ENCODE measurements at regions of chr4 and their contacts with region 1.

Region 1: GRCh38 chr4:174282836-174283506 is 496 bp downstream of the FBXO8 start:
- DNase-seq: peak; percentile 47 to 87 (median 83)
- ATAC-seq: peak; percentile 97
- H3K4me3 ChIP-seq: peak overlapping the region; percentile 99
- H3K4me3 Mint-ChIP-seq: peak overlapping the region; percentile 91 to 100 (median 99)
- H3K27ac ChIP-seq: peak overlapping the region; percentile 98
- H3K27ac Mint-ChIP-seq: peak overlapping the region; percentile 99 to 100 (median 100)
- H3K4me1 ChIP-seq: peaks cover 25 to 29% of the 10 kb centered on the region in 2 donors
- H3K4me1 Mint-ChIP-seq: peaks cover 38 to 91% (median 81%) of the 10 kb centered on the region in 7 donors
- H3K27me3 ChIP-seq: no peaks in the 10 kb centered on the region
- H3K27me3 Mint-ChIP-seq: no peaks in the 10 kb centered on the region

Region 2: GRCh38 chr4:173168396-173169177 is 1114.4 kb before region 1 on chr4 and contains the start of gene GALNT7:
- CTCF ChIA-PET with region 1: no interaction called
- POLR2A ChIA-PET with region 1: no interaction called
- intact Hi-C with region 1: loop called (anchors 1 to 2 kb)
- DNase-seq: peak; percentile 27 to 71 (median 46)
- ATAC-seq: peak; percentile 68
- H3K4me3 ChIP-seq: peak within 1 kb of the TSS; percentile 76
- H3K4me3 Mint-ChIP-seq: peak within 1 kb of the TSS; percentile 93 to 98 (median 96)
- H3K27ac ChIP-seq: peak within 1 kb of the TSS; percentile 73
- H3K27ac Mint-ChIP-seq: peak within 1 kb of the TSS; percentile 80 to 96 (median 91)
- H3K4me1 ChIP-seq: peaks cover 15 to 23% of the 10 kb centered on the region in 2 donors
- H3K4me1 Mint-ChIP-seq: peaks cover 30 to 61% (median 48%) of the 10 kb centered on the region in 7 donors
- H3K27me3 ChIP-seq: no peaks in the 10 kb centered on the region
- H3K27me3 Mint-ChIP-seq: no peaks in the 10 kb centered on the region
- total RNA-seq, gene GALNT7: 10.2 to 24.1 (median 21.2) TPM

Region 3: GRCh38 chr4:173370477-173371291 is 912.3 kb before region 1 on chr4 and contains the start of gene SAP30:
- CTCF ChIA-PET with region 1: no interaction called
- POLR2A ChIA-PET with region 1: interaction called, 3 read pairs
- intact Hi-C with region 1: loop called (anchors 1 kb)
- DNase-seq: peak; percentile 88 to 97 (median 91)
- ATAC-seq: peak; percentile 91
- H3K4me3 ChIP-seq: peak within 1 kb of the TSS; percentile 99
- H3K4me3 Mint-ChIP-seq: peak within 1 kb of the TSS; percentile 89 to 100 (median 98)
- H3K27ac ChIP-seq: peak within 1 kb of the TSS; percentile 82
- H3K27ac Mint-ChIP-seq: peak within 1 kb of the TSS; percentile 88 to 99 (median 97)
- H3K4me1 ChIP-seq: peaks cover 5 to 20% of the 10 kb centered on the region in 2 donors
- H3K4me1 Mint-ChIP-seq: peaks cover 14 to 46% (median 18%) of the 10 kb centered on the region in 7 donors
- H3K27me3 ChIP-seq: peaks cover 0 to 10% of the 10 kb centered on the region in 2 donors
- H3K27me3 Mint-ChIP-seq: peaks cover 2 to 29% (median 17%) of the 10 kb centered on the region in 5 donors
- total RNA-seq, gene SAP30: 0.48 to 27.4 (median 1.1) TPM

Region 4: GRCh38 chr4:174303687-174304086 is 20.7 kb after region 1 on chr4:
- CTCF ChIA-PET with region 1: no interaction called
- POLR2A ChIA-PET with region 1: interaction called, 4 read pairs
- intact Hi-C with region 1: loop called in 1 of 2 experiments (anchors 2 kb)
- DNase-seq: no peak
- ATAC-seq: no peak
- H3K4me3 ChIP-seq: no peak overlapping the region
- H3K4me3 Mint-ChIP-seq: no peak overlapping the region
- H3K27ac ChIP-seq: no peak overlapping the region
- H3K27ac Mint-ChIP-seq: no peak overlapping the region
- H3K4me1 ChIP-seq: no peaks in the 10 kb centered on the region
- H3K4me1 Mint-ChIP-seq: peaks cover 0 to 15% (median 8%) of the 10 kb centered on the region in 7 donors
- H3K27me3 ChIP-seq: no peaks in the 10 kb centered on the region
- H3K27me3 Mint-ChIP-seq: no peaks in the 10 kb centered on the region

Region 5: DNA sequence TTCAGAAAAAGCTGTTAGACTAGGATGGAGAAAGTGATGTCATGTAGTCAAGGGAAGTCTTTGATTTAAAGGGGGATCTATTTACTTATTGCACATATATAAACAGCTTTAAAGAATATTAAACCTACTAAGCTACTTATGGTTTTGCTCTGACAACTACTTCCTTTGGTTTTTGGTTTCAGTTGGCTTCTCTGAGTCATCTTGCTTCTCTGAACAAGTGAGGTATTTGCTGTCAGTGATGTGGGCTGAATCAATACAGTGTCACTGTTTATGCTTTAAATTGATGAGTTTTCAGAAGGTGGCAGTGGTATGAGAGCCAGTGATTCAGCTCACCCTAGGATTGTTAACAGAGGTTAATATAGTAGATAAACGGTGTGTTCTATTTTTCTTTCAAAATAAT is 75.9 kb after region 1 on chr4:
- CTCF ChIA-PET with region 1: no interaction called
- POLR2A ChIA-PET with region 1: no interaction called
- intact Hi-C with region 1: loop called in 1 of 2 experiments (anchors 2 kb)
- DNase-seq: no peak
- ATAC-seq: peak; percentile 26
- H3K4me3 ChIP-seq: no peak overlapping the region
- H3K4me3 Mint-ChIP-seq: no peak overlapping the region
- H3K27ac ChIP-seq: no peak overlapping the region
- H3K27ac Mint-ChIP-seq: no peak overlapping the region
- H3K4me1 ChIP-seq: no peaks in the 10 kb centered on the region
- H3K4me1 Mint-ChIP-seq: peaks cover 0 to 23% (median 0%) of the 10 kb centered on the region in 7 donors
- H3K27me3 ChIP-seq: peaks cover 0 to 2% of the 10 kb centered on the region in 2 donors
- H3K27me3 Mint-ChIP-seq: peaks cover 8 to 28% (median 21%) of the 10 kb centered on the region in 5 donors

Region 6: GRCh38 chr4:174522183-174523048 is 239.4 kb after region 1 on chr4 and contains the start of gene HPGD:
- CTCF ChIA-PET with region 1: no interaction called
- POLR2A ChIA-PET with region 1: no interaction called
- intact Hi-C with region 1: loop called in 1 of 2 experiments (anchors 1 kb)
- DNase-seq: peak; percentile 33 to 79 (median 67)
- ATAC-seq: peak; percentile 90
- H3K4me3 ChIP-seq: peak within 1 kb of the TSS; percentile 66
- H3K4me3 Mint-ChIP-seq: peak within 1 kb of the TSS; percentile 77 to 91 (median 88)
- H3K27ac ChIP-seq: peak within 1 kb of the TSS; percentile 38
- H3K27ac Mint-ChIP-seq: peak within 1 kb of the TSS in 7 of 9 donors; percentile 6 to 93 (median 86)
- H3K4me1 ChIP-seq: peaks cover 0 to 5% of the 10 kb centered on the region in 2 donors
- H3K4me1 Mint-ChIP-seq: peaks cover 0 to 45% (median 17%) of the 10 kb centered on the region in 7 donors
- H3K27me3 ChIP-seq: peaks cover 0 to 4% of the 10 kb centered on the region in 2 donors
- H3K27me3 Mint-ChIP-seq: peaks cover 23 to 52% (median 38%) of the 10 kb centered on the region in 5 donors
- total RNA-seq, gene HPGD: 2.5 to 13.5 (median 4.6) TPM

Region 7: DNA sequence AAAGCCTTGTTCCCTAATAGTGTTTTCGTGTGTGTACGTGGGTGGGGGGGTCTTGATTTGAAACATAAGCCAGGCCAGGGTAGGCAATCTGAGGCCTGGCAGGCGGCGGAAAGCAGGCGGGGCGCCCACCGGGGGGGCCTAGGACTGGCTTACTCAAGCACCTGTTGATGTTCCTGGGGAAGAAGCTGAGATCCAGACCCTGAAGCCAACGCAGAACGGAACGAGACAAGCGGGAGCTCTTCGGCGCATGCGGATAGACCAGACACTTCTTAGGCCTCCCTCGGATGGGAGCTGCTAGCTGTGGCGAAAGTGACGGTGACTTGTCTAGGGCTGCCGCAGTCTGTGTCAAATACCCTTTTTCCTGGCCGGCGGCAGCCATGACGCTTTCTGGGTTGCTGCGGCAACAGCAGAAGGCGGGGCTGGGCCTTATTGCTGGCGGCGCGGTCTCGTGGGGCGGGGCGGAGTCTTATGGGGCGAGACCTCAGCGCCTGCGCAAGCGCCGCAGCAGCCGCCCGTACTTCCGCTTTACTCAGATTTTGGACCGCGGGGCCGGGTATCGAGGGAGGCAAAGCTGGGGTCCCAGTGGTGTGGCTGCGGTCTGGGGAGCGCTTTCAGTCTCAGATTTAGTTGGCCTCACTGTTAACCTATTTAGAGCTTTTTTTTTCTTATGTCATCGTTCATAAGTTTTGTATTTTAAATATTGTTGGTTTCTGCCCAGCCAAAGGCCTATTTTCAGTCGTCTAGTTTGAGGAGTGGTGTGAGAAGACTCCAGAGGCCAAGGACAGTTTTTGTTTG is 1912.4 kb after region 1 on chr4 and contains the start of gene SPATA4:
- CTCF ChIA-PET with region 1: no interaction called
- POLR2A ChIA-PET with region 1: no interaction called
- intact Hi-C with region 1: loop called (anchors 1 to 5 kb)
- DNase-seq: peak; percentile 85 to 92 (median 91)
- ATAC-seq: peak; percentile 99
- H3K4me3 ChIP-seq: peak within 1 kb of the TSS; percentile 83
- H3K4me3 Mint-ChIP-seq: peak within 1 kb of the TSS; percentile 83 to 94 (median 90)
- H3K27ac ChIP-seq: peak within 1 kb of the TSS; percentile 65
- H3K27ac Mint-ChIP-seq: peak within 1 kb of the TSS; percentile 75 to 96 (median 93)
- H3K4me1 ChIP-seq: peaks cover 5 to 9% of the 10 kb centered on the region in 2 donors
- H3K4me1 Mint-ChIP-seq: peaks cover 3 to 12% (median 10%) of the 10 kb centered on the region in 7 donors
- H3K27me3 ChIP-seq: peaks cover 0 to 12% of the 10 kb centered on the region in 2 donors
- H3K27me3 Mint-ChIP-seq: peaks cover 4 to 43% (median 16%) of the 10 kb centered on the region in 5 donors
- total RNA-seq, gene SPATA4: not detected